GM10248 (cell line): ENCODE measurements at regions of chr17 and their contacts with region 1.

Region 1: GRCh38 chr17:64938925-64939474 is 19.7 kb upstream of the LRRC37A3 start:
- DNase-seq: peak; percentile 75
- CTCF ChIP-seq: peak; percentile 73

Region 2: DNA sequence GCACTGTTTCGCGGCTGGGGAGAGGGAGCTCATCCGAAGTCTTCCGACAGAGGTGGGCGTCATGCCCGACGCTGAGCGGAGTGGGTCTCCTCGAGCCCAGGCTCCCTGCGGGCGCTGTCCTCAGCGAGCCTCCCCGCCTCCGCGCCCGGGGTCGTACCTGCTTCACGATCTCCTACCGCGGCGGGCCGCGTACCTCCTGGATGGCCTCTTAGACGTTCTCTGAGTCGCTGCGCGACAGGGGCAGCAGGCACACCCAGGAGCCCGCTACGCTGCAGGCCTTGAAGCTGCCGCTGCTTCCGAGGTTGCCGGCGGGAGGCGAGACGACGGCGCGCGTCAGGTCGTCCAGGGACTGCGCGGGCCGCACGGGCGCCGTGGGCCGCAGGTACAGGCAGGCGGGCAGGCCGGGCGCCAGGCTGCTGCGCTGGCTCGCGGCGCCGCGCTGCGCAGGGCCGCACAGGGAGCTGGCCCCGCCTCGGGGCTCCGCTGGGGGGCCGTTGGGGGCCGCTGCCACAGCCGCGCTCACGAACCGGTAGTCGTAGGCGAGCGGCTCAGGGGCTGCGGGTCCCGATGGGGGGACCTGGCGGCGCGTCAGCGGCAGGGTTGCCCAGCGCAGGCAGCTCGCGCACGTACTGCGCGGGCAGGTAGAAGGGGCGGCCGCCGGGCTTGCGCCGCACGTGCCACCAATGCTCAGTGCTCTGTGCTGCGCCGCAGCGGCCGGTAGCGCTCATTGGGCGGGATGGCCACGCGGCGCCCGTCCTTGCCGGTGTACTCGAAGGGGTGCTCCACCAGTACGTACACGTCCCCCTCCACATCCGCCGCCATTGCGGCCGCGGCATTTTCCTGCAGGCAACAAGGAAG is 160.5 kb before region 1 on chr17:
- CTCF ChIA-PET with region 1: interaction called, 15 read pairs
- POLR2A ChIA-PET with region 1: no interaction called
- DNase-seq: no peak
- CTCF ChIP-seq: no peak

Region 3: GRCh38 chr17:64920026-64920418 is 19.0 kb before region 1 on chr17:
- CTCF ChIA-PET with region 1: interaction called, 18 read pairs
- POLR2A ChIA-PET with region 1: no interaction called
- DNase-seq: no peak
- CTCF ChIP-seq: no peak

Region 4: GRCh38 chr17:64964796-64965195 is 25.8 kb after region 1 on chr17:
- CTCF ChIA-PET with region 1: interaction called, 44 read pairs
- POLR2A ChIA-PET with region 1: no interaction called
- DNase-seq: no peak
- CTCF ChIP-seq: no peak